ENCODE measurements at regions of chr6 and their contacts with region 1.

Region 1: GRCh38 chr6:125314019-125314581 is 12.3 kb upstream of the HDDC2 start:
- DNase-seq: peak; percentile 22 to 75 (median 63)
- H3K4me3 ChIP-seq: no peak overlapping the region
- H3K27ac ChIP-seq: peak overlapping the region in 8 of 59 donors; percentile 6 to 54 (median 28)
- H3K27me3 ChIP-seq: no peaks in the 10 kb centered on the region
- CTCF ChIP-seq: peak; percentile 66 to 98 (median 91)

Region 2: GRCh38 chr6:124870611-124871459 is 443.3 kb before region 1 on chr6:
- intact Hi-C with region 1: loop called (anchors 2 to 10 kb)
- DNase-seq: no peak
- H3K4me3 ChIP-seq: no peak overlapping the region
- H3K27ac ChIP-seq: no peak overlapping the region
- H3K27me3 ChIP-seq: no peaks in the 10 kb centered on the region
- CTCF ChIP-seq: peak; percentile 59 to 91 (median 78)

Region 3: GRCh38 chr6:124947971-124948451 is 366.1 kb before region 1 on chr6:
- intact Hi-C with region 1: no loop called
- DNase-seq: no peak
- H3K4me3 ChIP-seq: no peak overlapping the region
- H3K27ac ChIP-seq: no peak overlapping the region
- H3K27me3 ChIP-seq: no peaks in the 10 kb centered on the region
- CTCF ChIP-seq: no peak

Region 4: DNA sequence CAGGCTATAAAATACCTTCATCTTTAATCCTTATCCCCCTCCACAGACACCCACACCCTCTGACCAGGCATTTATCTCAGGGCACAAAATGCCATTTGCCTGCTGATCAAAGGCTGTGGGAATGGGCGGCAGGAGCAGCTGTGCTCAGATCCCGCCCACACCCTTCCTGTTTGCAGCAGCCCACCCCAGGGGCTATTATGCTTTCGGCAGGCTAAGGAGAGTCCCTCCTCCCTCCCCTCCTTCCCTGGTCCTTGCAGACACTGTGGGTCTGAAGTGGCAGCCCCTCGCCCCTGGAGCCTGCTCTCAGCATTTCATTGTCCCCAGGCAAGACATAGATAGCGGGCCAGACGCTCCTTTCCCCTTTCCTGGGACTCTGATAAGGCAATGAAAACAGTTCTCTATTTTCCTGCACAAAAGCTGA is 214.5 kb after region 1 on chr6:
- intact Hi-C with region 1: no loop called
- DNase-seq: no peak
- H3K4me3 ChIP-seq: no peak overlapping the region
- H3K27ac ChIP-seq: no peak overlapping the region
- H3K27me3 ChIP-seq: peaks cover 0 to 11% (median 0%) of the 10 kb centered on the region in 45 donors
- CTCF ChIP-seq: no peak

Region 5: GRCh38 chr6:125584468-125585029 is 270.4 kb after region 1 on chr6:
- intact Hi-C with region 1: loop called (anchors 2 to 10 kb)
- DNase-seq: peak in 9 of 10 donors; percentile 59 to 87 (median 82)
- H3K4me3 ChIP-seq: peak overlapping the region in 10 of 59 donors; percentile 0 to 27 (median 22)
- H3K27ac ChIP-seq: peak overlapping the region in 50 of 59 donors; percentile 4 to 85 (median 58)
- H3K27me3 ChIP-seq: peaks cover 0 to 4% (median 0%) of the 10 kb centered on the region in 45 donors
- CTCF ChIP-seq: peak; percentile 24 to 82 (median 61)

Region 6: DNA sequence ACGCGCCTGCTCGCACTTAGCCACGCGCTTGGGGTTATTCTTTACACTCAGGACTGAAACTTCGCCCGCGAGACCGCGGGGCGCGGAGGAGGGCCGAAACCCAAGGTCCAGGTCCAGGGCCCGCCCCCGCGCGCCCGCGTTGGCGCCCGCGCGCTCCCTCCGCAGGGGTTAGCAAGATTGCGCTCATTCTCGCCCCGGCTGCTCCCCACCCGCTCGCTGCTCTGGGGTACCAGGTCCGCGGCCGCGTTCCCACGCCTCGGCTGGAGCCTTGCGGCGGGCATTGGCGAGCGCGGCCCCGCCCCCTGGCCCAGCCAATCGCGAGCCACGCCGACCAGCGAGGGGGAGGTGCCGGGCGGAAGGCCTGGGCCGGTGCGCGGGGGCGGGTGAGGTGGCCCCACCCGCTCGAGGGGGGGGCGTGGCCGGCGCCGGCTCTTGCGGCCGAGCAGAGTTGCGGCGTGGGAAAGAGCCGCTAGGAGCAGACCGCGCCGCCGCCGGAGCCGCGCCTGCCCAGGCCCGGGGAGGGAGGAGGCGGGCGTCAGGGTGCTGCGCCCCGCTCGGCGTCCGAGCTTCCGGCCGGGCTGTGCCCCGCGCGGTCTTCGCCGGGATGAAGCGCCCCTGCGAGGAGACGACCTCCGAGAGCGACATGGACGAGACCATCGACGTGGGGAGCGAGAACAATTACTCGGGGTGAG is 435.2 kb after region 1 on chr6 and contains the start of gene HEY2:
- intact Hi-C with region 1: loop called in 1 of 2 experiments (anchors 5 kb)
- DNase-seq: peak; percentile 87 to 97 (median 92)
- H3K4me3 ChIP-seq: peak within 1 kb of the TSS; percentile 51 to 91 (median 78)
- H3K27ac ChIP-seq: peak within 1 kb of the TSS; percentile 81 to 99 (median 96)
- H3K27me3 ChIP-seq: peaks cover 0 to 62% (median 13%) of the 10 kb centered on the region in 45 donors
- CTCF ChIP-seq: peak in 19 of 56 donors; percentile 4 to 52 (median 21)
- total RNA-seq, gene HEY2: 3.3 to 16.5 (median 7.2) TPM

Region 7: GRCh38 chr6:125764121-125764671 is 450.1 kb after region 1 on chr6:
- intact Hi-C with region 1: loop called (anchors 2 to 5 kb)
- DNase-seq: no peak
- H3K4me3 ChIP-seq: no peak overlapping the region
- H3K27ac ChIP-seq: peak overlapping the region in 15 of 59 donors; percentile 6 to 45 (median 24)
- H3K27me3 ChIP-seq: peaks cover 0 to 6% (median 0%) of the 10 kb centered on the region in 45 donors
- CTCF ChIP-seq: no peak

Region 8: DNA sequence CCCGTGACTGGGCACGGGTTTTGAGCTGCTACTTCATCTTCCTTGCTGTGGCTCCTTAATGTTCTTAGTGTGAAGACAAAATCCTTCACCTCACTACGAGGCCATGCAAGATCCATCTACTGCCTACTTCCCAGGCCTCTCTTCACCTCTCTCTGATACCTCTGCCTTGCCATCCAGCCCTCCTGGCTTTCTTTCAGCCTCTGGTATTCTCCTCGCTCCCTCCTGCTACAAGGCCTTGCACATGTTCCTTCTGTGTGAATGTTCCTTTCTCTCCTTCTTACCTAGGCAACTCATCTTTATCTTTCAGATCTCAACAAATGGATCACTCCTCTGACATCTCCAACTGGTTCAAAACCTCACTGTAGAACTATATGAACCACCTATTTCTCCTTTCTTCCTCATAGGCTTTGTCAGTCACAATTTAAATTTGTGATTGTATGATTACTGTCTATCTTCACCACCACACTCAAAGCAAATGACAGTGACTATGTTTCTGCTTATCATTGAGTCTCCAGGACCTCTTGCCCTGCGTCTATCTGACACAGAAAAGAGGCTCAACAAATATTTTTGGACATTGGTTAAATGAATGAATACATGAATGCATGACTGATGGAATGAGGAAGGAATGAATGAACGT is 455.2 kb after region 1 on chr6:
- intact Hi-C with region 1: loop called (anchors 2 to 5 kb)
- DNase-seq: no peak
- H3K4me3 ChIP-seq: no peak overlapping the region
- H3K27ac ChIP-seq: no peak overlapping the region
- H3K27me3 ChIP-seq: peaks cover 0 to 4% (median 0%) of the 10 kb centered on the region in 45 donors
- CTCF ChIP-seq: no peak

Region 9: GRCh38 chr6:125974214-125974866 is 660.2 kb after region 1 on chr6:
- intact Hi-C with region 1: loop called in 1 of 2 experiments (anchors 5 kb)
- DNase-seq: no peak
- H3K4me3 ChIP-seq: no peak overlapping the region
- H3K27ac ChIP-seq: peak overlapping the region in 38 of 59 donors; percentile 2 to 78 (median 51)
- H3K27me3 ChIP-seq: no peaks in the 10 kb centered on the region
- CTCF ChIP-seq: peak; percentile 53 to 92 (median 72)

Measured in dorsolateral prefrontal cortex (tissue), 120 donors.